H1 (cell line): ENCODE measurements at regions of chr2 and their contacts with region 1.

Region 1: DNA sequence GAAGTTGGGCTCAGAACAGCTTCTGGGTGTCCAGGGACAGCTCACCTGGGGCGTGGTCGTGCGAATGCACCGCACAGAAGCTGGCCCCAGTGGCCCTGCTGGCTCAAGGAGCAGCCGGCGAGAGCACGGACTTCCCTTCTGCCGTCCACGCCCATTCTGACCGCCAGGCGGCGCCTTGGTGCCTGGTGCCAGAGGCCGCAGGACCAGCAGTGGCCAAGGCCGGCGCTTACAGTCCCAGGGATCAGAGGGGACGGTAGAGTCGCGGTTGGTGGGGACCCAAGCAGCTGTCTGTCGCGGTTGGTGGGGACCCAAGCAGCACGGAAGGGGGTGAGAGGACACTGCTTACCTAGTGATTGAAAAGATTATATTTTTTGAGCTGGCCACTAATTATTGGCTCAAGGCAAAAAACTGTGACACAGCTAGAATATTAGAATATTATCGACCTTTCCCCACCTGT is 25.7 kb downstream of the NPPC start:
- DNase-seq: peak; percentile 85 to 99
- H3K4me3 ChIP-seq: peak overlapping the region in 1 of 4 experiments; percentile 29; a peak in 1 of 8 replicates
- H3K27ac ChIP-seq: no peak overlapping the region
- H3K4me1 ChIP-seq: peaks cover 0 to 8% (median 2%) of the 10 kb centered on the region in 4 experiments; a peak in 5 of 7 replicates
- H3K27me3 ChIP-seq: no peaks in the 10 kb centered on the region
- CTCF ChIP-seq: peak; percentile 99
- EP300 ChIP-seq: no peak
- POLR2A ChIP-seq: no peak
- RAD21 ChIP-seq: peak; percentile 67 to 84

Region 2: GRCh38 chr2:231800493-231801091 is 99.9 kb before region 1 on chr2:
- CTCF ChIA-PET with region 1: interaction called, 20 read pairs
- POLR2A ChIA-PET with region 1: no interaction called
- DNase-seq: peak in 1 of 2 experiments; percentile 78
- H3K4me3 ChIP-seq: no peak overlapping the region
- H3K27ac ChIP-seq: no peak overlapping the region
- H3K4me1 ChIP-seq: no peaks in the 10 kb centered on the region; a peak in 1 of 7 replicates
- H3K27me3 ChIP-seq: no peaks in the 10 kb centered on the region
- CTCF ChIP-seq: peak; percentile 65 to 78 (median 67)
- EP300 ChIP-seq: no peak
- POLR2A ChIP-seq: no peak
- RAD21 ChIP-seq: peak; percentile 39 to 57

Region 3: GRCh38 chr2:231910771-231911170 is 10.3 kb after region 1 on chr2:
- CTCF ChIA-PET with region 1: interaction called, 220 read pairs
- POLR2A ChIA-PET with region 1: no interaction called
- DNase-seq: no peak
- H3K4me3 ChIP-seq: no peak overlapping the region
- H3K27ac ChIP-seq: no peak overlapping the region
- H3K4me1 ChIP-seq: peaks cover 0 to 6% (median under 1%) of the 10 kb centered on the region in 4 experiments; a peak in 1 of 7 replicates
- H3K27me3 ChIP-seq: no peaks in the 10 kb centered on the region
- CTCF ChIP-seq: no peak
- EP300 ChIP-seq: no peak
- POLR2A ChIP-seq: no peak
- RAD21 ChIP-seq: no peak

Region 4: GRCh38 chr2:232230557-232230956 is 330.0 kb after region 1 on chr2:
- CTCF ChIA-PET with region 1: interaction called, 21 read pairs
- POLR2A ChIA-PET with region 1: no interaction called
- DNase-seq: peak; percentile 13 to 74
- H3K4me3 ChIP-seq: no peak overlapping the region
- H3K27ac ChIP-seq: no peak overlapping the region
- H3K4me1 ChIP-seq: peaks cover 5 to 13% (median 8%) of the 10 kb centered on the region in 4 experiments
- H3K27me3 ChIP-seq: no peaks in the 10 kb centered on the region
- CTCF ChIP-seq: peak; percentile 58 to 87 (median 59)
- EP300 ChIP-seq: no peak
- POLR2A ChIP-seq: no peak
- RAD21 ChIP-seq: peak; percentile 74 to 78

Region 5: DNA sequence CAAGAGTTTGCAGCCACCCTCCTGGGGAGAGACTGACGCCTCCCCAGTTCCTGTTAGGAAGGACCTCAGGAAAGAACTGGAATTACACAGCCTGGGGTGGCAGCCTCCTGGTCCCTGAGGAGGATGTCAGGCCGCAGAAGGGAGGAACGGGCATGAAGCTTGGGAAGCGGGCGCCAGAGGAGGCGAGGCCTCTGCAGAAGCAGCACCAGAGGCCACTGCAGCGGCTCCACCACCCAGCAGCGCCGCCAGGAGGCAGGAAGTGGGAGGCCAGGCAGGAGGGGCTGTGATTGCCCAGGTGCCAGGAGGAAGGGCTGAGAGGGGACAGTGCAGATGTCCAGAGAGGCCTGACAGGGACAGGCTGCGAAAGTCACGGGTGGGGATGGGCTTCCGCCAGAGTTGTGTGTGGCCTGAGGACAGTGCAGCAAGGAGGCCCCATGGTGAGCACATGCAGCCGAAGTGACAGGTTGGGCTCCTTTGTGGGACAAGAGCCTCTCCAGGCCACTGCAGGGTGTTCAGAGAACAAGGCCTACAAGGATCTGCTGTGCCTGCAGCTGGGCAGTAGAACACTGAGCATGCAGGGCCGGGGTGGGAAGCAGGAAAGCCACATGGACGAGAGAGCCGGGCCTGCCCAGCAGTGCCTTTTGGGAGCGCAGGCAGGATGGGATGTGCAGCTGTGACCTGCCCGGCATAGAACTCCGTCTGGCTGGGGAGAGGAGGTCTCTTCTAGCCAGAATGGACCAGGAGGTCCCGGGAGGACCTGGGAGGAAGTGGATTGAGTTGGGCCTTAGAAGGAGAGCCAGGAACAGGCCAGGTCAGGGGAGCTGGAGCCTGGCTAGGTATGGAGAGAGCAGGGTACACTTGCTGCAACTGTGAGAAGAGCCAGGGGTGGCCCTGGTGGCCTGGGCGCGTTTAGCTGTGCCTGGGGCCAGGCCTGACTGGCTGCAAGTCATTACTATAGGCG is 438.9 kb after region 1 on chr2:
- CTCF ChIA-PET with region 1: interaction called, 18 read pairs
- POLR2A ChIA-PET with region 1: no interaction called
- DNase-seq: peak in 1 of 2 experiments; percentile 89
- H3K4me3 ChIP-seq: no peak overlapping the region
- H3K27ac ChIP-seq: no peak overlapping the region
- H3K4me1 ChIP-seq: no peaks in the 10 kb centered on the region; a peak in 1 of 7 replicates
- H3K27me3 ChIP-seq: no peaks in the 10 kb centered on the region
- CTCF ChIP-seq: peak in 2 of 3 experiments; percentile 82 to 87; a peak in 3 of 4 replicates
- EP300 ChIP-seq: no peak
- POLR2A ChIP-seq: no peak
- RAD21 ChIP-seq: peak; percentile 54 to 62

Region 6: GRCh38 chr2:232438951-232439757 is 538.6 kb after region 1 on chr2:
- CTCF ChIA-PET with region 1: interaction called, 11 read pairs
- POLR2A ChIA-PET with region 1: no interaction called
- DNase-seq: peak in 1 of 2 experiments; percentile 71
- H3K4me3 ChIP-seq: no peak overlapping the region
- H3K27ac ChIP-seq: no peak overlapping the region
- H3K4me1 ChIP-seq: peaks cover 0 to 6% (median 4%) of the 10 kb centered on the region in 4 experiments; a peak in 6 of 7 replicates
- H3K27me3 ChIP-seq: peaks cover 0 to 2% (median 0%) of the 10 kb centered on the region in 4 experiments; a peak in 3 of 7 replicates
- CTCF ChIP-seq: peak in 2 of 3 experiments; percentile 22 to 28; a peak in 2 of 4 replicates
- EP300 ChIP-seq: no peak
- POLR2A ChIP-seq: no peak
- RAD21 ChIP-seq: peak; percentile 36 to 45